Panc1 (cell line): ENCODE measurements at regions of chrX and their contacts with region 1.

Region 1: DNA sequence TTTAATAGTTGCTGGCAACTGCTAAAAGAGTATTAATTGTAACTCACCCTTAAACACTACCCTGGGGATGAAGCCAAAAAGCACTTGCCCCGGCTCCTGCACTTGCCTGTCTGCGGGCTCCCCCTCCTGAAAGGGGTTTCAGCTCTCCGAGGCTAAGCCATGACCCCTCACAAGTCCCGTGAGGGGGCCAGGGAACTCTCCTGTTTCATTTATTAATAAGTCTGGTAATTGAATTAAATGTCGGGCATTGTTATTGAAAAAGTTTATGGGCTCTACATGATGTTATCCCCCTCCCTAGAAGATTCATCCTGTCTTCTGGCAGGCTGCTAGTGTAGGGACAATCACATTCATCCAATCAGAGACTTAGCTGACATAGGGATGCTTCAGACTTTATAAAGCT is 23.3 kb downstream of the GSPT2 start:
- DNase-seq: no peak
- ATAC-seq: no peak
- H3K4me3 ChIP-seq: no peak overlapping the region
- H3K27ac ChIP-seq: no peak overlapping the region
- H3K4me1 ChIP-seq: no peaks in the 10 kb centered on the region
- H3K27me3 ChIP-seq: peaks cover 6% of the 10 kb centered on the region
- CTCF ChIP-seq: no peak

Region 2: DNA sequence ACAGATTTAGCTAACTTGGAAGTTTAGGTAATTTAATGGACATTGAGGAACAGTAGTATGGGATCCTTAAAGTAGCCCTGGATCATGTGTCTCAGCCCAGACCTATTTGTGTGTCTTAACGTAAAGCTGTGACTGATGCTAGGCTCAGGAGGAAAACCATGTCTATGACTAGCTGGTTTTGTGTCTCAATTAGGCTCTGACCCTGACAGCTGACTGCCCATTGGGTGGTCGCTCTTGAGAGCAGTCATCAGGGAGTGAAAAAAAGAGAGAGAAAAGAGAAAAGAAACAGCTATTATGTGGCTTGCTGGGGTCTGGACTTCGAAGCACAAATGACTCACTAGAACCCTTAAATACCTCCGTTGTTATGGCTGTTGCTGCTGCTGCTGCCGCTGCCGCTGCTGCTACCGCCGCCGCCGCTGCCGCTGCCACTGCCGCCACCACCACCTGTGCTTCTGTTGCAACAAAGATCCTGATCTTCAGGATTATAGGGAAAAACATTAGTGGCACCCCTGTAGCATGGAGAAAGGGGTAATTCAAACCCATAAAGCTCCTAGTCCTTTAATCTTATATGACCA is 47.4 kb after region 1 on chrX:
- CTCF ChIA-PET with region 1: no interaction called
- POLR2A ChIA-PET with region 1: interaction called, 12 read pairs
- in situ Hi-C with region 1: no loop called
- intact Hi-C with region 1: no loop called
- DNase-seq: no peak
- ATAC-seq: no peak
- H3K4me3 ChIP-seq: no peak overlapping the region
- H3K27ac ChIP-seq: no peak overlapping the region
- H3K4me1 ChIP-seq: no peaks in the 10 kb centered on the region
- H3K27me3 ChIP-seq: no peaks in the 10 kb centered on the region
- CTCF ChIP-seq: no peak

Region 3: GRCh38 chrX:51892921-51893745 is 126.6 kb after region 1 on chrX and contains the start of gene MAGED1:
- CTCF ChIA-PET with region 1: no interaction called
- POLR2A ChIA-PET with region 1: no interaction called
- in situ Hi-C with region 1: no loop called
- intact Hi-C with region 1: no loop called
- DNase-seq: peak; percentile 67
- ATAC-seq: peak; percentile 93
- H3K4me3 ChIP-seq: peak within 1 kb of the TSS; percentile 77 to 92
- H3K27ac ChIP-seq: peak within 1 kb of the TSS; percentile 88
- H3K4me1 ChIP-seq: peaks cover 10% of the 10 kb centered on the region
- H3K27me3 ChIP-seq: no peaks in the 10 kb centered on the region
- CTCF ChIP-seq: no peak
- total RNA-seq, gene MAGED1: 151 TPM